ENCODE measurements at regions of chr6 and their contacts with region 1.

Region 1: GRCh38 chr6:90393232-90393884 is 96.7 kb upstream of the BACH2 start:
- DNase-seq: peak; percentile 63
- H3K4me3 ChIP-seq: no peak overlapping the region
- H3K27ac ChIP-seq: no peak overlapping the region
- H3K4me1 ChIP-seq: no peaks in the 10 kb centered on the region
- H3K27me3 ChIP-seq: no peaks in the 10 kb centered on the region
- CTCF ChIP-seq: peak; percentile 53 to 77 (median 72)
- POLR2A ChIP-seq: no peak

Region 2: GRCh38 chr6:89940225-89941027 is 452.9 kb before region 1 on chr6:
- intact Hi-C with region 1: loop called (anchors 10 kb)
- DNase-seq: peak; percentile 90
- H3K4me3 ChIP-seq: no peak overlapping the region
- H3K27ac ChIP-seq: peak overlapping the region; percentile 77 to 82
- H3K4me1 ChIP-seq: peaks cover 8% of the 10 kb centered on the region
- H3K27me3 ChIP-seq: no peaks in the 10 kb centered on the region
- CTCF ChIP-seq: peak; percentile 26 to 87 (median 74)
- POLR2A ChIP-seq: no peak

Region 3: DNA sequence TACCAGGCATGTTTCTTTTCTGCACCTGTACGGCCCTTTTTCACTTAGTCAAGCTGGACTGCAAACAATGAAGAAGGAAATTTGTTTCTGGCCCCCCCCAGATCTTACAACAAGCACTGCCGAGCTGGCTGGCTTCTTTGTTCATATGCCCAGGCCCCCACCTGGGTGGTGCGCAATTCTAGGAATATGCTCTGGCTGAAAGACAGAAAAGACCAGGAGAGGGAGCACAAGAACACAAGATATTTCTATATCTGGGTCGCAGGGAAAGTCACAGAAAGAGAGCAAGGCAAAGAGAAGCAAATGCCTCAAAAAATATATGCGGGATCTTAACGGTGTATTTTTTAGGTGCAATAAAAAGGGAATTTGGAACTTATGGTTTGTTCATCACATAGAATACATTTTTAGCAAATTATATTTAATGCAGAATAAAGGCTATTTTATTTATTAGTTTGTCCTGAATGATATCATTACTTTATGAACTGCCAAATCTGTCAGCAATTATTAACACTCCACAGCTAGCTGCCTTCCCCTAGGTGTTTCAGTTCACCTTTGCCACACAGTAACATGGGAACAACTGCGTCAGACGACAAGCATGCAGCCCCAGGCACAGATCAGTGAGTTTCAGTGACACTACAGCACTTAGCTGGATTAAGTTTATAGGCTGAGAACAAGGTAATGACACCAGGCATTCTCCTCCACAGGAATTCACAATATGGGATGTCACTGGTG is 422.6 kb before region 1 on chr6:
- intact Hi-C with region 1: loop called (anchors 5 kb)
- DNase-seq: peak; percentile 40
- H3K4me3 ChIP-seq: no peak overlapping the region
- H3K27ac ChIP-seq: no peak overlapping the region
- H3K4me1 ChIP-seq: no peaks in the 10 kb centered on the region
- H3K27me3 ChIP-seq: no peaks in the 10 kb centered on the region
- CTCF ChIP-seq: peak in 3 of 4 experiments; percentile 48 to 75 (median 73)
- POLR2A ChIP-seq: no peak

Region 4: GRCh38 chr6:90098001-90098531 is 295.3 kb before region 1 on chr6:
- intact Hi-C with region 1: loop called (anchors 2 kb)
- DNase-seq: peak; percentile 75
- H3K4me3 ChIP-seq: no peak overlapping the region
- H3K27ac ChIP-seq: peak overlapping the region; percentile 48 to 67
- H3K4me1 ChIP-seq: no peaks in the 10 kb centered on the region
- H3K27me3 ChIP-seq: no peaks in the 10 kb centered on the region
- CTCF ChIP-seq: peak in 3 of 4 experiments; percentile 15 to 46 (median 43)
- POLR2A ChIP-seq: no peak

Measured in prostate gland (tissue), 2 donors.